CD4-positive, alpha-beta T cell (primary cell): ENCODE measurements at regions of chr6 and their contacts with region 1.

Region 1: GRCh38 chr6:73388800-73389512 is 5.7 kb upstream of the DDX43 start:
- DNase-seq: peak in 13 of 14 experiments; percentile 11 to 81 (median 41)
- ATAC-seq: peak; percentile 71
- H3K4me3 ChIP-seq: peak overlapping the region; percentile 71
- H3K4me3 Mint-ChIP-seq: peak overlapping the region; percentile 82
- H3K27ac ChIP-seq: peak overlapping the region in 1 of 2 donors; percentile 59
- H3K27ac Mint-ChIP-seq: peak overlapping the region; percentile 77
- H3K4me1 ChIP-seq: peaks cover 23% of the 10 kb centered on the region
- H3K4me1 Mint-ChIP-seq: peaks cover 19% of the 10 kb centered on the region
- H3K27me3 ChIP-seq: no peaks in the 10 kb centered on the region
- H3K27me3 Mint-ChIP-seq: no peaks in the 10 kb centered on the region
- CTCF ChIP-seq: peak; percentile 48

Region 2: GRCh38 chr6:73285674-73286283 is 103.2 kb before region 1 on chr6:
- CTCF ChIA-PET with region 1: no interaction called
- POLR2A ChIA-PET with region 1: no interaction called
- intact Hi-C with region 1: loop called in 1 of 2 experiments (anchors 10 kb)
- DNase-seq: peak in 3 of 14 experiments; percentile 20 to 27 (median 24)
- ATAC-seq: no peak
- H3K4me3 ChIP-seq: no peak overlapping the region
- H3K4me3 Mint-ChIP-seq: no peak overlapping the region
- H3K27ac ChIP-seq: no peak overlapping the region
- H3K27ac Mint-ChIP-seq: no peak overlapping the region
- H3K4me1 ChIP-seq: no peaks in the 10 kb centered on the region
- H3K4me1 Mint-ChIP-seq: no peaks in the 10 kb centered on the region
- H3K27me3 ChIP-seq: no peaks in the 10 kb centered on the region
- H3K27me3 Mint-ChIP-seq: no peaks in the 10 kb centered on the region
- CTCF ChIP-seq: no peak